Left colon (tissue), 2 donors: ENCODE measurements at regions of chr11 and their contacts with region 1.

Region 1: GRCh38 chr11:24386546-24387397 is 110.1 kb upstream of the LUZP2 start:
- DNase-seq: no peak
- ATAC-seq: no peak

Region 2: GRCh38 chr11:23539556-23539955 is 847.2 kb before region 1 on chr11:
- intact Hi-C with region 1: loop called in 1 of 2 experiments (anchors 10 kb)
- DNase-seq: no peak
- ATAC-seq: no peak

Region 3: GRCh38 chr11:24240496-24241175 is 146.1 kb before region 1 on chr11:
- intact Hi-C with region 1: no loop called
- DNase-seq: no peak
- ATAC-seq: no peak

Region 4: GRCh38 chr11:24295360-24295759 is 91.4 kb before region 1 on chr11:
- intact Hi-C with region 1: no loop called
- DNase-seq: no peak
- ATAC-seq: no peak

Region 5: GRCh38 chr11:24617856-24618255 is 231.1 kb after region 1 on chr11:
- intact Hi-C with region 1: no loop called
- DNase-seq: no peak
- ATAC-seq: no peak

Region 6: GRCh38 chr11:25576320-25576719 is 1189.5 kb after region 1 on chr11:
- intact Hi-C with region 1: no loop called
- DNase-seq: no peak
- ATAC-seq: no peak